ENCODE measurements at regions of chr3 and their contacts with region 1.

Region 1: GRCh38 chr3:184362668-184363540 is 1.4 kb downstream of the POLR2H start:
- DNase-seq: peak; percentile 98
- H3K4me3 Mint-ChIP-seq: peak overlapping the region; percentile 98
- H3K27ac Mint-ChIP-seq: peak overlapping the region; percentile 94
- H3K4me1 Mint-ChIP-seq: peaks cover 32% of the 10 kb centered on the region
- H3K27me3 Mint-ChIP-seq: peaks cover 2% of the 10 kb centered on the region

Region 2: DNA sequence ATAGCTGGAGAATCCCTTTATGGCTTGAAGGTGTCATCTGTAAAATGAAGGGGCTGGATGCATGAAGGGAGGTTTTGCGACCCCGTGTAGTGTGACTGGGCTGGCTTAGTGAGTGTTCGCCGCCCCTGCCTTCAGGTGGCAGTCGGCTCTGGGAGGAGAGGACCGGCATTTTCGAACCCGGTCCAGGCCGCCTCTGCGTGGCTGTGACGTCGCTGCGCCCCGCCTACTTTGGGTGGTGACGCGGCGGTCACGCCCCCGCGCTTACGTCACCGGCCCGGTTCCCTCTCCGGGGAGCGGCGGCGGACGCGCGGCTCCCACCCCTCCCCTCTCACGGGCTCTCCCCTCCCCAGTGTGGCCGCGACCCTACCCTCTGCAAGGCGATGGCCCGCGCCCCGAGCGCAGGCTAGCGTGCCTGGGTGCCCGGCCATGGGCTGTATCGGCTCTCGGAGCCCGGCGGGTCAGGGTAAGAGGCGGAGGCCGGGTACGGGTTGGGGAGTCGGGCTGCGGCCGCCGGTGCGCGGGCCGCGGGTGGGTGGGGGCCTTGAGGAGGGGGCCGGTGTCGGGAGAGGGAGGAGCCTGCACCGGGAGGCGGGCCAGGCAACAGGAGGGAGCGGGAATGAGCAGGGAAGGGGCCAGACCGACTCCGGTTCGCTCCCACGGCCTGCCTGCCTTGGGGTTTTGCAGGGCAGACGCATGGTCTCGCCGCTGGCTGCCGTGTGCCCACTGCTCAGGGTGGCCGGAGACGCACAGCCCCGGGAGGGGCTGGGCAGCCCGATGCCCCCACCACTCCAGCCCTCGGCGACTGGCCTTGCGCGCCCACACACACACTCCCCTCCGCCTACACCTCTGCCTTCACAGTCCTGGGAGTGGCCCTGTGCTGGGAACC is 27.0 kb before region 1 on chr3:
- CTCF ChIA-PET with region 1: no interaction called
- POLR2A ChIA-PET with region 1: interaction called, 13 read pairs
- DNase-seq: peak; percentile 87
- H3K4me3 Mint-ChIP-seq: peak overlapping the region; percentile 78
- H3K27ac Mint-ChIP-seq: peak overlapping the region; percentile 93
- H3K4me1 Mint-ChIP-seq: peaks cover 64% of the 10 kb centered on the region
- H3K27me3 Mint-ChIP-seq: no peaks in the 10 kb centered on the region

Region 3: DNA sequence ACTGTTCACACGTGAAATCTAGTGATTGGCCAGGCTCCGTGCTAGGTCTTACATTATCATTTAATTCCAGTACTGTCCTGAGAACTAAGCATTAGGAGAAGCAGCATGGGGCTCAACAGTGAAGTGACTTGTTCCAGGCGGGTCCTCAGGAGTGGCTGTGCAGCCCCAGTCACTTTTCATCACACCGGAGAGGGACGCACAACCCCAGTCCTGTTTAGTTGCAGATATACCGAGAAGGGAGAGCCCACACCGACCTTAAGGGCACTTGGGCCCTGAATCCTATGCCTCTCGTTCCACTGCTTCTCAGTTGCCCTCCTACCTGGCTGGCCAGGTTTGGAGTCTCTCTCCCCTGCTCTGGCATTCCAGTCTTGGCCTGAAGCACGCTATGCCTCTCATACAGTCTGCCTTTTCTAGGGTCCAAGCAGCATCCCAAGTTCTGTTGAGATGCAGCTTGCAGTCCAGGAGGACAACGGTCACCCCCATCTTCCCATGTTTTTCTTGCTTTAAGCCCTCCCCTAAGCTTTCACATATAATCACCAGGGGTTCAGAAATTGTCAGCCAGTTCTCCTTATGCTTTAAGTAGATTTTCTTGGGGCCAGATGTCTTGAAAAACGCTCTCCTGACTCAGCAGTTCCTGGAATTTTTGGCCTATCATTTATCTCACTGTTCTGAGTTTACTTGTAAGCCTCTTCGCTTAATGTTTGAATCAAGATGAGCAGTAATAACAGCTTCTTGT is 15.4 kb before region 1 on chr3:
- CTCF ChIA-PET with region 1: interaction called, 3 read pairs
- POLR2A ChIA-PET with region 1: interaction called, 10 read pairs
- DNase-seq: no peak
- H3K4me3 Mint-ChIP-seq: no peak overlapping the region
- H3K27ac Mint-ChIP-seq: no peak overlapping the region
- H3K4me1 Mint-ChIP-seq: peaks cover 9% of the 10 kb centered on the region
- H3K27me3 Mint-ChIP-seq: no peaks in the 10 kb centered on the region

Region 4: GRCh38 chr3:184380191-184380626 is 17.3 kb after region 1 on chr3:
- CTCF ChIA-PET with region 1: no interaction called
- POLR2A ChIA-PET with region 1: no interaction called
- DNase-seq: no peak
- H3K4me3 Mint-ChIP-seq: no peak overlapping the region
- H3K27ac Mint-ChIP-seq: no peak overlapping the region
- H3K4me1 Mint-ChIP-seq: peaks cover 5% of the 10 kb centered on the region
- H3K27me3 Mint-ChIP-seq: peaks cover 61% of the 10 kb centered on the region

Measured in activated CD4-positive, alpha-beta memory T cell treated with anti-CD3 and anti-CD28 coated beads, Interleukin-2, amount 10 ng/mL, durations not matched to agents 7 days and 5 days (primary cell).